Left ventricle myocardium superior (tissue), 1 donor: ENCODE measurements at regions of chr20 and their contacts with region 1.

Region 1: DNA sequence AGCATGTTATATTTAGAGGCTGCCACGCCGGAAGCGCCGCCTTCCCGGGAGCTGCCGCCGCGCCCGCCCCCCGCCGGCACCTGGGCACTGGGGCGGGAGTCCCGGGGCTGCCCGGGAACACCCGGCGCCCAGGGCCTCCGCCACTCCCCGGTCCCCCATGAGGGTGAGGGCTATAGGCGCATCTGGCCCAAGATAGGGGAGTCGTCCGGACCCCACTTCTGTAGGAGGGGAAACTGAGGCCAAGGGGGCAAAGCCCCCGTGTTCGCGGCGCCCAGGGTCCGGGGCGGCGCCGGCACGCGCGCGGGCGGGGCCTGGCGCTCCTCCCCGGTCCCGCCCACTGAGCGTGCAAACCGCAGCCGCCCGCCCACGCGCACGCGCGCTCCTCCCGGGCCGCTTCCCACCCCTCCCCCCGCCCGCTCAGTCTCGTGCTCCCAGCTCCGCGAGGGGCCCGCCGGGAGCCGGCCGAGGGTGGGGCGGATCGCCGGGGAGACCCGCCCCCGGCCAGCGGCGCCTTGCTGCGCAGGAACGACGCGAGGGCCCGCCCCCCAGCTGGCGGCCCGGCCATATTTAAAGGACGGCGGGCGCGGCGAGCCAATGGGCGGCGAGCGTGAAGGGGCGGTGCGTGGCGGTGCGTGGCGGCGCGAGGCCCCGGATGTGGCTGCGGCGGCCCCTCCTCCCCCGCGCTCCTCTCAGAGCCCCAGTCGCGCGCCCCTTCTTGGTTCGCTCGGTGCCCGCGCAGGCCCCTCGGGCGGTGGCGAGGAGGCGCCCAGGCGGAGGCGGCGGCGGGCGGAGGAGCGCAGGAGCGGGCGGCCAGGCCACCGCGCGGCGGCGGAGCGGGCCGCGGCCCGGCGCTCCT is at the start of gene LSM14B:
- DNase-seq: peak; percentile 99
- ATAC-seq: peak; percentile 86
- total RNA-seq, gene LSM14B: 58.4 TPM

Region 2: DNA sequence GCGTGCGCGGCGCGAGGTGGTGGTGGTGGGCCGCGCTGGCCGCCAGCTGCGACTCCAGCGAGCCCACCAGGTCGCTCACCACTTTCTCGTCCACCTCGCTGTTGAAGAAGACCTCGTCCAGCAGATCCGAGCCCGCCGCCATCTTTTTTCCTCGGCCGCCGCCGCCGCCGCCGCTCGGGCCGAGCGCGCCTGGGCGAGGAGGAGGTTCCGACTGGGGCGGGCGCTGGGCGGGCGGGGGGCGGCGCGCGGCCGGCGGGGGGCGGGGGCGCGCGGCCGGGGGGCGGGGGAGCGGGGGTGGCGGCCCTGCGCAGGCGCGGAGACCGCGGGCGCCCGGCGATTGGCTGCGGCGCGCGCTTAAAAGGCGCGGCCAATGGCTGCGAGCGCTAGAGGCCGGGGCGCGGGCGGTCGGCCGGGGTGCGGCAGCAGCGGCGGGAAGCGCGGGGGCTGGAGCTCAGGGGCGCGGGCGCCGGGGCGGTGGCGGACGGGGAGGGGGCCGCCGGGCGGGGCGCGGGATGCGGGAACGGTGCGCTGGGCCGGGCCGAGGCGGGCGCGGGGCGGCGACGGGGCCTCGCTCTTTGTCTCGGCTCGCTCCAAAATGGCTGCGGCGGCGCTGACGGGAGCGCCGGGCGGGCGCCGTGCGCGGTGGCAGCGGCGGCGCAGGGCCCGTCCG is 56.2 kb before region 1 on chr20 and contains the start of gene TAF4:
- intact Hi-C with region 1: loop called (anchors 10 kb)
- DNase-seq: peak; percentile 87
- ATAC-seq: peak; percentile 65
- total RNA-seq, gene TAF4: 11.2 TPM